GM10248 (cell line): ENCODE measurements at regions of chr9 and their contacts with region 1.

Region 1: GRCh38 chr9:107127602-107128001 is 155.5 kb upstream of the RAD23B start:
- DNase-seq: no peak
- CTCF ChIP-seq: no peak

Region 2: DNA sequence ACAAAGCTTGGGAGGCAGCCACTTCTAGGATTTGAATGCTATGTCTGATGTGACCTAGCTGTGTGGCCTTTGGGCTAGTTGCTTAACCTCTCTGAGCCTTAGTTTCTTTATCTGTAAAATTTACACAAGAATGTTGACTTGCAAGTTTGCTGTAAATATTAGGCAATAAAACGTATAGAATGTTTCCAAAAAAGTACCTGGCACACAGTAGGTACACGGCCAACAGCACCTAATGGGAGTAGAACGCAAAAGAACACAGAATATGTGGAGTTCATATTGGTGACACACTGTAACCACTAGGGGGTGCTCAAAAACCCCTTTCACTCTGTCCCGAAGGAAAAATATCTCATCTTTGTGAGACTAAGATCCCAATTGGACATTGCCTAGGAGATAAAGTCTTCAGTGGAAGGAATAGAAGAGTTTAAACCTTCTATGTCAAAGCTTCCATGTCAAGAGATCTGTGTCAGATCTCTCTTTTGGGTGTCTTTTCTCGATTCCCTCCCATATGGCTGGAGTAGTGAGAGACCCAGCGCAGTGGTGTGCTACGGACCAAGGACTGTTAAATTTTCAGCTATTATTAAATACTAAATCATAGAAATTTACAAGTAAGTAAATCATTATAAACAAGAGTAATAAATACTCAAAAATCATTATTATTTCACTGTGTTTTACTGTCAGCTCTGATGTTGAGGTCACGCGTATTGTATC is 10.0 kb after region 1 on chr9:
- CTCF ChIA-PET with region 1: interaction called, 22 read pairs
- POLR2A ChIA-PET with region 1: no interaction called
- DNase-seq: peak; percentile 46
- CTCF ChIP-seq: peak; percentile 48